PC-9 (cell line): ENCODE measurements at regions of chr1 and their contacts with region 1.

Region 1: DNA sequence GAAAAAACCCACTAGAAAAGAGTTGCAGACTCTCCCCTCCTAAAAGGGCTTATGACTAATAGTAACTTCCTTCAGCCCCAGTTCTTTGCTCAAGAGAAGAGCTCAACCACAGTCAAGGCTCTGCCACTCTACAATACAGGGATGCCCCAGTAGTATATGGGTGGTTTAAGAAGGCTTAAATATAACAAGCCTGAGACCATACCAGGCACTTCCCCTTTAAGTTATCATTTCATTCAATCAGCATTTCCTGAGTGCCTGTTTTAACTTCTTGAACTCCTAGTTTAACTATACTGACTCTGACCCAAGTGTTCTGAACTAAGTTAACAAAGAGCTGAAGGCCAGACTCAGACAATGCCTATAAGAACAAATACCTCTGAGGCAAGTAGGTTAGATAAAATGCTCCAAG is 19.8 kb downstream of the PRPF38A start:
- DNase-seq: no peak
- H3K4me3 ChIP-seq: no peak overlapping the region
- H3K27ac ChIP-seq: no peak overlapping the region
- H3K4me1 ChIP-seq: peaks cover 25% of the 10 kb centered on the region
- H3K27me3 ChIP-seq: no peaks in the 10 kb centered on the region
- CTCF ChIP-seq: no peak

Region 2: GRCh38 chr1:51578383-51579082 is 845.7 kb before region 1 on chr1:
- CTCF ChIA-PET with region 1: no interaction called
- POLR2A ChIA-PET with region 1: no interaction called
- intact Hi-C with region 1: no loop called
- DNase-seq: no peak
- H3K4me3 ChIP-seq: no peak overlapping the region
- H3K27ac ChIP-seq: no peak overlapping the region
- H3K4me1 ChIP-seq: peaks cover 14% of the 10 kb centered on the region
- H3K27me3 ChIP-seq: no peaks in the 10 kb centered on the region
- CTCF ChIP-seq: no peak

Region 3: GRCh38 chr1:52288286-52288685 is 135.9 kb before region 1 on chr1:
- CTCF ChIA-PET with region 1: no interaction called
- POLR2A ChIA-PET with region 1: no interaction called
- intact Hi-C with region 1: loop called (anchors 10 kb)
- DNase-seq: peak in 1 of 2 experiments; percentile 36
- H3K4me3 ChIP-seq: no peak overlapping the region
- H3K27ac ChIP-seq: no peak overlapping the region
- H3K4me1 ChIP-seq: no peaks in the 10 kb centered on the region
- H3K27me3 ChIP-seq: no peaks in the 10 kb centered on the region
- CTCF ChIP-seq: no peak

Region 4: GRCh38 chr1:52669696-52670095 is 245.5 kb after region 1 on chr1:
- CTCF ChIA-PET with region 1: no interaction called
- POLR2A ChIA-PET with region 1: interaction called, 30 read pairs
- intact Hi-C with region 1: no loop called
- DNase-seq: no peak
- H3K4me3 ChIP-seq: no peak overlapping the region
- H3K27ac ChIP-seq: no peak overlapping the region
- H3K4me1 ChIP-seq: peaks cover 19% of the 10 kb centered on the region
- H3K27me3 ChIP-seq: no peaks in the 10 kb centered on the region
- CTCF ChIP-seq: no peak

Region 5: DNA sequence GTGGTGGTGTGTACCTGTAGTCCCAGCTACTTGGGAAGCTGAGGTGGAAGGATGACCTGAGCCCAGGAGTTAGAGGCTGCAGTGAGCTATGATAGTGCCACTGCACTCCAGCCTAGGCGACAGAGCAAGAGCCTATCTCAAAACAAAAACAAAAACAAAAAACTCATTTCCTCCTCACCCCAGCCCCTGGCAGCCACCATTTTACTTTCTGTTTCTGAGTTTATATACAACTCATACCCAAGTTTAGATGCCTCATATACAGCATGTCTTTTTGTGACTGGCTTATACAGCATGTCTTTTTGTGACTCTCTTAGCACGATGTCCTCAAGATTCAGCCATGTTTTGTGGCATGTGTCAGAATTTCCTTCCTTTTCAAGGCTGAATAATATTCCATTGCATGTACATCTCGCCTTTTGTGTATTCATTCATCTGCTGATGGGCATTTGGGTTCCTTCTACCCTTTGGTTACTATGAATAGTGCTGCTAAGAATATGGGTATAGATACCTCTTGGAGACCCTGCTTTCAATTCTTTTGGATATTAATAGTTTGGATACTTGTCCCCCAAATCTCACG is 259.2 kb after region 1 on chr1:
- CTCF ChIA-PET with region 1: interaction called, 4 read pairs
- POLR2A ChIA-PET with region 1: no interaction called
- intact Hi-C with region 1: loop called (anchors 5 kb)
- DNase-seq: no peak
- H3K4me3 ChIP-seq: no peak overlapping the region
- H3K27ac ChIP-seq: no peak overlapping the region
- H3K4me1 ChIP-seq: no peaks in the 10 kb centered on the region
- H3K27me3 ChIP-seq: no peaks in the 10 kb centered on the region
- CTCF ChIP-seq: no peak